ENCODE measurements at regions of chr2 and their contacts with region 1.

Region 1: GRCh38 chr2:176454893-176455811 is 185.9 kb downstream of the MTX2 start:
- DNase-seq: peak; percentile 90
- H3K4me3 Mint-ChIP-seq: no peak overlapping the region
- H3K27ac Mint-ChIP-seq: no peak overlapping the region
- H3K4me1 Mint-ChIP-seq: no peaks in the 10 kb centered on the region
- H3K27me3 Mint-ChIP-seq: no peaks in the 10 kb centered on the region
- CTCF ChIP-seq: peak; percentile 94

Region 2: DNA sequence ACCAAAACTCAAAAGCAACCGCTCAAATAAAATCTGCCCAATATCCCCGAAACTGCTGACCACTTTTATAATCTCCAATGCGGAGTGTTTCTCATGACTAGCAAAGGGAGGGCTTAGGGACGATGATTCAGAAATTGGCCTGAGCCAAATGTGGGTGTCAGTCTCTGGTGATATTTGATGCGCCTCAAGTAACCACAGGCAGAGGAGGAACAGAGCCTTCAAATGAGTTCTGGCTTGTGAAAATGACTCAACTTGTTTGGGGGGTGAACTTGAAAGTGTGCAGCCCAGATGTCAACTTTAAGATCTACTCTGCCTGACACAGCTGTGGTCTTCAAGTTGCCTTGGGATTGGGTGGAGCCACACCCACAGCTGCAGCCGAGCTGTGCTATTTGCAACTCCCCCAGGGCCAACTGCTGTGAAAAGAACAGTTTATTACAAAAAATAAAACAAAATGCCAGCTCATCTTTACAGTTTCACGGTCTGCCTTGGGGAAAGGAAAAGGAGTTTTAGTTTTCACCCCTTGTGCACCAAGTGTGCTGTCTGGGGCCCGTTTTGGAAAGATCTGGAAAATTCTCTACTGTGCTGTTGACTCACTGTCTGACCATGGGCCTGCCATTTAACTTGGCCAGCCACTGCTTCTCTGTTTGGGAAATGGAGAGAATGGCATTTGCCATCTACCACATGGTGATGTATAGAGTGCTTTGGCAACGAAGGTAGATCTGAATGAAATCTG is 36.2 kb after region 1 on chr2:
- CTCF ChIA-PET with region 1: no interaction called
- intact Hi-C with region 1: no loop called
- DNase-seq: no peak
- H3K4me3 Mint-ChIP-seq: no peak overlapping the region
- H3K27ac Mint-ChIP-seq: no peak overlapping the region
- H3K4me1 Mint-ChIP-seq: no peaks in the 10 kb centered on the region
- H3K27me3 Mint-ChIP-seq: no peaks in the 10 kb centered on the region
- CTCF ChIP-seq: no peak

Region 3: DNA sequence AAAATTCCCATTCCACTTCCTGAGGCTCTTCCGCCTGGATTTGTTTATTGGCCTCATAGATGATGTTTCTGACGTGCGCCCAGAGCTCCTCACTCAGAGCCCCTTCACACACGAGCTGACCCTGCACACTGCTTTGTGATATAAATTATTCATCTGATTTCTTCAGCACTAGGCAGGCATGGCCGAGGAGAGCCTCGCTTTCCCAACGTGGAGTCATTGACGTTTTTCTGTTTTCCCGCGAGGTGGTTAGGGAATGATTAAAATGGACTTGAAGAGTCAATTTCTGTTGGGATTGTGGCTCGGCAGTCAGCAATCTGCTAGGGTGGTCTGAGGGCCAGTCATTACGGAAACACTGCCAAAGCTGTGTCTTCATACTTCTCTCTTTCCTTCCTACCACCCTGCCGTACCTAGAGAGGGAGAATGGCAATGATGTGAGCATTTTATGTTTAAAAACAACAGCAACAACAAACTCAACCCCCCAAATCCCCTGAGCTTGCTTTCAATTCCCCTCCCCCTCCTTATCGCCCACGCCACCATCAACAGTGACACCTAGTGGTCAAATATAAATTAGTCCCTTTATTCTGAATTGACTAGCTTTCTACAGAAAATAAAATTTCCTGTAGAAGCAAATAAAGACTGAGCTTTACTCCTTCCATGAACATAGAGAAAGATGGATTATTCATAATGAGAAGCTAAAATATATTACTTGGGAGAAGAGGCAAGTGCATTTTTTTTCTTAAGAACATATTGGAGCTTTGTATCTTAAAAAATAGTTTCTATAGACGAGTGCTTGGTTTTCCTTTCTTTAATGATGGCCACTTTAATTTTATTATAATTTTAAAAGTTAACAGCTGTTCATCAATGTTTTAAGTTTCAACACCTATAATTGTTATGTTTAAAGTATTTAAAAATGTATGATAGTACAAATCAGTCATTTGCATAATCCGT is 99.2 kb after region 1 on chr2:
- CTCF ChIA-PET with region 1: interaction called, 37 read pairs
- intact Hi-C with region 1: loop called (anchors 1 kb)
- DNase-seq: peak; percentile 49
- H3K4me3 Mint-ChIP-seq: peak overlapping the region; percentile 73
- H3K27ac Mint-ChIP-seq: peak overlapping the region; percentile 64
- H3K4me1 Mint-ChIP-seq: peaks cover 17% of the 10 kb centered on the region
- H3K27me3 Mint-ChIP-seq: no peaks in the 10 kb centered on the region
- CTCF ChIP-seq: peak; percentile 48

Region 4: GRCh38 chr2:176817061-176817565 is 362.0 kb after region 1 on chr2:
- CTCF ChIA-PET with region 1: no interaction called
- intact Hi-C with region 1: no loop called
- DNase-seq: peak; percentile 30
- H3K4me3 Mint-ChIP-seq: no peak overlapping the region
- H3K27ac Mint-ChIP-seq: no peak overlapping the region
- H3K4me1 Mint-ChIP-seq: no peaks in the 10 kb centered on the region
- H3K27me3 Mint-ChIP-seq: peaks cover 10% of the 10 kb centered on the region
- CTCF ChIP-seq: peak; percentile 15